ENCODE measurements at regions of chr17 and their contacts with region 1.

Region 1: DNA sequence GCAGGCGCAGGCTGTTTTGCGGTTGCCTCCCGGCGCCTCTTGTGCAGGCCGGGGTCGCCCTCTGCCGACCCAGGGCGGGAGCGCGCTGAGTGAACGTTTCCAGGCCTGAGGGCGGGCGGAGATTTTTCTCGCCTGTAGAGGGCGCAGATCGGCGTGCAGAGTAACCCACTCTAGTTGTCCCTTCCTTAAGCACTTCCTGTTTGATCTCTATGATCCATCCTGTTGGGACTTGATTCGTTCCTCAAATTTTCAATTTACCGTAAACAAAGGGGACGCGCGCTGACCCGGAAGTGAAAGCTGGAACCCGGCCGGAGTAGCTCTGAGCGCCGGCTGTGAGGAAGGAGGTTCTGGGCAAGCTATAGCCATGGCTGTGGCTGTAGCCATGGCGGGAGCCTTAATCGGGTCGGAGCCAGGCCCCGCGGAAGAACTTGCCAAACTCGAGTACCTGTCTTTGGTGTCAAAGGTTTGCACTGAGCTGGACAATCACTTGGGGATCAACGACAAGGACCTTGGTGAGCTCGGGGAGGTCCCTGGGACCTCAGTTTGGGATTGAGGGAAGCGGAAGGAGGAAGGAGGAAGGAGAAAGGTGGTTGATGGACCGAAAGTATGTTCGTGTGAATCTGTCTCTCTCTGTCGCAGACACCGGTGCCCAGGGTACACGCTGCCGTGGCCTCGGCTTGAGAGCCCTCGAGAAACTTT is at the start of gene DHX8:
- DNase-seq: peak; percentile 99
- H3K4me3 Mint-ChIP-seq: peak within 1 kb of the TSS; percentile 96
- H3K27ac Mint-ChIP-seq: peak within 1 kb of the TSS; percentile 92
- H3K4me1 Mint-ChIP-seq: peaks cover 27% of the 10 kb centered on the region
- H3K27me3 Mint-ChIP-seq: no peaks in the 10 kb centered on the region
- total RNA-seq, gene DHX8: 46.2 to 46.3 TPM

Region 2: DNA sequence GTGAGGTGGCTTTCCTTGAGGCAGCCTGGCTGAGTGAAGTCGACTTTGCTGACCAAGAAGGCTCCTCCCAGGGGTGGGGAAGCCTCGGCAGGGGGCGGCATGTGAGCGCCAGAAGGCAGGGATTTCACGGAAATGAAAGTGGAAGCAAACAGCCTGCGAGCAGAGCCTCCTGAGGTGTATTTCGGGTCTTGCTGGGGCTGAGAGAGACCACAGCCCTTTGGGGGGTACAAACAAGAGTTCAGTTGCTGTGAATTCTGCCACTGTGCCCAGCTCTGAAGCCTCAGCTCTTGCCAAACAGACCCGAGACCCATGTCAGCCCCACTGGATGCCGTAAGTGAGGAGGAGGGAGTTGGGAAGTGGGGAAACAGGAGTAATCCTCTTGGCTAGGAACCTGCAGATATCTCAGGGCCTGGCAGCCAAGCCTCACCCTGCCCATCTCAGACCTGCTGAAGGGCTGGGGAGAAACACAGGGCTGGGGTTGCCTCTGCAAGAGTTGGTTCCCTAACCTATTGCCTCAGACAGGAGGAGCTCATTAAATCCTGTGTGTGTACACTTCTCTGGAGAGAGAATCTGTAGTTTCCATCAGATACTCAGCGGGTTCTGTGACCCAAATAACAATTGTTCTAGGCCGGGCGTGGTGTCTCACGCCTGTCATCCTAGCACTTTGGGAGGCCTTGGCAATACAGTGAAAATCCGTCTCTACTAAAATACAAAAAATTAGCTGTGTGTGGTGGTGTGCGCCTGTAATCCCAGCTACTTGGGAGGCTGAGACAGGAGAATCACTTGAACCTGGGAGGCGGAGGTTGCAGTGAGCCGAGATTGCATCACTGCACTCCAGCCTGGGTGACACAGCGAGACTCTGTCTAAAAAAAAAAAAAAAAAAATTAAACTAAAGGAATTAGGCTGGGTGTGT is 476.9 kb before region 1 on chr17 and contains the start of gene IFI35:
- CTCF ChIA-PET with region 1: no interaction called
- intact Hi-C with region 1: loop called (anchors 2 kb)
- DNase-seq: peak; percentile 94
- H3K4me3 Mint-ChIP-seq: peak within 1 kb of the TSS; percentile 100
- H3K27ac Mint-ChIP-seq: peak within 1 kb of the TSS; percentile 99
- H3K4me1 Mint-ChIP-seq: peaks cover 16% of the 10 kb centered on the region
- H3K27me3 Mint-ChIP-seq: no peaks in the 10 kb centered on the region
- total RNA-seq, gene IFI35: 43.9 to 50.5 TPM

Region 3: DNA sequence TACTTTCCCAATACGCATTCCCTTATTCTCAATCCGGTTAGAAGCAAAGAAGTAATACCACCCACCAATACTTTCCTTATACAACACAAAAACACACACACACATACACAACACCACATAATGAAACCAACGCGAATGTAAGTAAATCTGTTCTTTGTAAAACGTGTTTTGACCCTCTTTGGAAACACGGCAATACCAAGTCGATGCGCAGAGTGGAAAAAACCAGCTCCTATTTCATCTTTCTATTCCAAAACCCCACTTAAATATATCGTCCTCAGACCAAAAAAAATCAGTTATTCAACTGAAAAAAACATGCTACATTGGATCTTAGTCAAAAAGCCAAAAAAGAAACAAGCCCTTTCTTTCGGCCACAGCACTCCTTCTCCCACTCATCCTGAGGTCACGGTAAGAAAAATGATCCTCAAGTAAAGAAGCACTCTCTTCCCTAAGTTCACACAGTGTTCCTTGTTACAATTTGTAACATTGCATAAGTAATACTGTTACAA is 116.0 kb before region 1 on chr17:
- CTCF ChIA-PET with region 1: interaction called, 14 read pairs
- intact Hi-C with region 1: loop called (anchors 1 kb)
- DNase-seq: peak; percentile 45
- H3K4me3 Mint-ChIP-seq: peak overlapping the region; percentile 81
- H3K27ac Mint-ChIP-seq: peak overlapping the region; percentile 99
- H3K4me1 Mint-ChIP-seq: peaks cover 49% of the 10 kb centered on the region
- H3K27me3 Mint-ChIP-seq: no peaks in the 10 kb centered on the region

Region 4: DNA sequence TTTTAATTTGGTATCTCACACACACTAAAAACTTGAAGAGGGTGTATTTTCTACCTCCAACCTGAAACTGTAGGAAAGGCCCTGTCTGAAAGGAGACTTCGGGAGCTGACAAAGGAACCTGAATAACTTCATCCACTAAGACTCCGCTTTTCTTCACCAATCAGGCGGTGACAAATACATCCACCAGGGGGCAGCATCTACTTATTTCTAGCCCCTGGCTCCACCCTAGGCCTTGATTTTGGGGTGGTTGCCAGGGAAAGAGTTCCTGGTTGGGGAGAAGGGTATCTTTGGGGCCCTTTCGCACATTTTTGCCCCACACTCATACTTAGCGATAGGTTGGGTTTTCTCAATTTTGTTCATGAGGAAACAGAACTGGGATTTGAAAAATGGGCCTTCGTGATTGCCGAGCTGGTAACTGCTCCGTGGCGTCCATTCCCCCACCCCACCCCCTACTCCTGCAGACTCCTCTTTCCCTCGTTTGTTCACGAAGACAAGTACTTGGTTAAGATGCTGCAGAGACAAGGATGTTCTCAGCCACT is 89.8 kb before region 1 on chr17:
- CTCF ChIA-PET with region 1: interaction called, 192 read pairs
- intact Hi-C with region 1: loop called (anchors 1 kb)
- DNase-seq: peak; percentile 97
- H3K4me3 Mint-ChIP-seq: no peak overlapping the region
- H3K27ac Mint-ChIP-seq: peak overlapping the region; percentile 3
- H3K4me1 Mint-ChIP-seq: peaks cover 20% of the 10 kb centered on the region
- H3K27me3 Mint-ChIP-seq: no peaks in the 10 kb centered on the region

Region 5: GRCh38 chr17:43431714-43432523 is 51.9 kb before region 1 on chr17:
- CTCF ChIA-PET with region 1: no interaction called
- intact Hi-C with region 1: no loop called
- DNase-seq: no peak
- H3K4me3 Mint-ChIP-seq: no peak overlapping the region
- H3K27ac Mint-ChIP-seq: no peak overlapping the region
- H3K4me1 Mint-ChIP-seq: no peaks in the 10 kb centered on the region
- H3K27me3 Mint-ChIP-seq: peaks cover 12% of the 10 kb centered on the region

Region 6: GRCh38 chr17:43546319-43547188 is 62.7 kb after region 1 on chr17 and contains the start of gene ETV4:
- CTCF ChIA-PET with region 1: interaction called, 10 read pairs
- intact Hi-C with region 1: no loop called
- DNase-seq: peak; percentile 95
- H3K4me3 Mint-ChIP-seq: peak within 1 kb of the TSS; percentile 76
- H3K27ac Mint-ChIP-seq: no peak within 1 kb of the TSS
- H3K4me1 Mint-ChIP-seq: peaks cover 19% of the 10 kb centered on the region
- H3K27me3 Mint-ChIP-seq: peaks cover 57% of the 10 kb centered on the region
- total RNA-seq, gene ETV4: 1.4 to 1.9 TPM

Measured in activated naive CD4-positive, alpha-beta T cell treated with anti-CD3 and anti-CD28 coated beads for 36 hours (primary cell).